ENCODE measurements at regions of chr11 and their contacts with region 1.

Region 1: DNA sequence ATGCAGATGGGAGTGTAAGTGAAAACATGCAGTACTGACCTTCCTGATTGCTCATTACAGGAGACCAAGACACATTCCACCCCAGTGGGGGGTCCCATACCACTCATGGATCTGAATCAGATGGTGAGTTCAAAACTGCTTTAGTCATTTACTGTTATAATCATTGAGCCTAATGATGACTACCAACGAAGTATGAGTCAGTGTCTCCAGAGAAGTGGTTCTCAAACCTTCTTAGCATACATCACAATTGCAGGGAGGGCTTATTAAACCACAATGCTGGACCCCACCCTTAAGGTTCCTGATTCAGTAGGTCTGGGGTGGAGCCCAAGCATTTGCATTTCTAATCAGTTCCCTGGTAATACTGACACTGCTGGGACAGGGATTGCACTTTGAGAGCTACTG is 75.8 kb downstream of the CD44 start:
- DNase-seq: peak in 1 of 5 donors; percentile 77
- H3K4me3 ChIP-seq: no peak overlapping the region
- H3K4me3 Mint-ChIP-seq: peak overlapping the region in 6 of 8 donors; percentile 7 to 76 (median 16)
- H3K27ac ChIP-seq: no peak overlapping the region
- H3K27ac Mint-ChIP-seq: peak overlapping the region; percentile 78 to 99 (median 91)
- H3K4me1 ChIP-seq: peaks cover 65% of the 10 kb centered on the region
- H3K4me1 Mint-ChIP-seq: peaks cover 57 to 92% (median 73%) of the 10 kb centered on the region in 4 donors
- H3K27me3 ChIP-seq: no peaks in the 10 kb centered on the region
- H3K27me3 Mint-ChIP-seq: no peaks in the 10 kb centered on the region

Region 2: GRCh38 chr11:35045236-35045820 is 169.5 kb before region 1 on chr11:
- CTCF ChIA-PET with region 1: no interaction called
- POLR2A ChIA-PET with region 1: no interaction called
- intact Hi-C with region 1: no loop called
- DNase-seq: peak; percentile 91 to 97 (median 94)
- H3K4me3 ChIP-seq: no peak overlapping the region
- H3K4me3 Mint-ChIP-seq: peak overlapping the region; percentile 76 to 97 (median 94)
- H3K27ac ChIP-seq: peak overlapping the region; percentile 91
- H3K27ac Mint-ChIP-seq: peak overlapping the region; percentile 96 to 100 (median 100)
- H3K4me1 ChIP-seq: peaks cover 89% of the 10 kb centered on the region
- H3K4me1 Mint-ChIP-seq: peaks cover 65 to 95% (median 82%) of the 10 kb centered on the region in 4 donors
- H3K27me3 ChIP-seq: no peaks in the 10 kb centered on the region
- H3K27me3 Mint-ChIP-seq: no peaks in the 10 kb centered on the region

Region 3: DNA sequence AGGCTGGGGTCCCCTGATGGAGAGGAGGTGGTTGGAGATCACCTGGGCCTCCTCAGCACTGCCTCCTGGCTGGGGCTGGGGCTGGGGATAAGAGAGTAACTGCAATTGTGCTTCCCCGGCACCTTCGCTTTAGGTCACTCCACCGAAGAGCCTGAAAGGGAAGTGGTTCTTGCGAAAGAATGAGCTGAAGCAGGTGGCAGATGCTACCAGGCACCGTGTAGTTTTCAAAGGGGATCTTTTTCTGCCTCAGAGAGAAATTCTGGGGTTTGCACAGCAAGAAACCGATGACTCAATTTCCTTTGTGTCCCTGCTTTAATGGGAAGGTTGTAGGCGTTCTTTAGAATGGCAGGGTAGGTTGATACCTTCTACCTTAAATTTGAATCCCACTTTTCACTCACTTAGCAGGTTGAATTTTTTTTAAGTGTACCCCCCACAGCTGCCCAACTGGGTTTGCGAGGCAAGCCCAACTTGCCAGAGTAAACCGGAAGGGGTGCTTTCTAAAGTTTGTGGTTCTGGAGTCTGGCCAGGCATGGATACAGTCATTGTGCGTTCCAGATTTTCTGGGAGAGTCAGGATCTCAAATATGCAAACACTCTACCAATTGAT is 70.6 kb before region 1 on chr11:
- CTCF ChIA-PET with region 1: no interaction called
- POLR2A ChIA-PET with region 1: interaction called, 5 read pairs
- intact Hi-C with region 1: loop called (anchors 2 kb)
- DNase-seq: peak; percentile 67 to 90 (median 76)
- H3K4me3 ChIP-seq: peak overlapping the region; percentile 55 to 59
- H3K4me3 Mint-ChIP-seq: peak overlapping the region; percentile 83 to 99 (median 98)
- H3K27ac ChIP-seq: peak overlapping the region; percentile 73
- H3K27ac Mint-ChIP-seq: peak overlapping the region; percentile 93 to 100 (median 95)
- H3K4me1 ChIP-seq: peaks cover 72% of the 10 kb centered on the region
- H3K4me1 Mint-ChIP-seq: peaks cover 60 to 88% (median 70%) of the 10 kb centered on the region in 4 donors
- H3K27me3 ChIP-seq: no peaks in the 10 kb centered on the region
- H3K27me3 Mint-ChIP-seq: no peaks in the 10 kb centered on the region

Region 4: GRCh38 chr11:35173011-35173511 is 41.7 kb before region 1 on chr11:
- CTCF ChIA-PET with region 1: no interaction called
- POLR2A ChIA-PET with region 1: interaction called, 5 read pairs
- intact Hi-C with region 1: loop called (anchors 2 kb)
- DNase-seq: peak in 1 of 5 donors; percentile 17
- H3K4me3 ChIP-seq: peak overlapping the region in 1 of 2 donors; percentile 3
- H3K4me3 Mint-ChIP-seq: peak overlapping the region in 7 of 8 donors; percentile 63 to 80 (median 71)
- H3K27ac ChIP-seq: peak overlapping the region; percentile 65
- H3K27ac Mint-ChIP-seq: peak overlapping the region; percentile 82 to 100 (median 93)
- H3K4me1 ChIP-seq: peaks cover 96% of the 10 kb centered on the region
- H3K4me1 Mint-ChIP-seq: peaks cover 86 to 95% (median 91%) of the 10 kb centered on the region in 4 donors
- H3K27me3 ChIP-seq: no peaks in the 10 kb centered on the region
- H3K27me3 Mint-ChIP-seq: no peaks in the 10 kb centered on the region

Measured in CD4-positive, alpha-beta memory T cell (primary cell).